Activated CD4-positive, alpha-beta memory T cell treated with anti-CD3 and anti-CD28 coated beads for 36 hours (primary cell): ENCODE measurements at regions of chr11 and their contacts with region 1.

Region 1: GRCh38 chr11:102451681-102452460 is 694 bp downstream of the TMEM123 start:
- DNase-seq: peak; percentile 86
- H3K4me3 Mint-ChIP-seq: peak overlapping the region; percentile 84
- H3K27ac Mint-ChIP-seq: peak overlapping the region; percentile 96
- H3K4me1 Mint-ChIP-seq: peaks cover 75% of the 10 kb centered on the region
- H3K27me3 Mint-ChIP-seq: no peaks in the 10 kb centered on the region

Region 2: DNA sequence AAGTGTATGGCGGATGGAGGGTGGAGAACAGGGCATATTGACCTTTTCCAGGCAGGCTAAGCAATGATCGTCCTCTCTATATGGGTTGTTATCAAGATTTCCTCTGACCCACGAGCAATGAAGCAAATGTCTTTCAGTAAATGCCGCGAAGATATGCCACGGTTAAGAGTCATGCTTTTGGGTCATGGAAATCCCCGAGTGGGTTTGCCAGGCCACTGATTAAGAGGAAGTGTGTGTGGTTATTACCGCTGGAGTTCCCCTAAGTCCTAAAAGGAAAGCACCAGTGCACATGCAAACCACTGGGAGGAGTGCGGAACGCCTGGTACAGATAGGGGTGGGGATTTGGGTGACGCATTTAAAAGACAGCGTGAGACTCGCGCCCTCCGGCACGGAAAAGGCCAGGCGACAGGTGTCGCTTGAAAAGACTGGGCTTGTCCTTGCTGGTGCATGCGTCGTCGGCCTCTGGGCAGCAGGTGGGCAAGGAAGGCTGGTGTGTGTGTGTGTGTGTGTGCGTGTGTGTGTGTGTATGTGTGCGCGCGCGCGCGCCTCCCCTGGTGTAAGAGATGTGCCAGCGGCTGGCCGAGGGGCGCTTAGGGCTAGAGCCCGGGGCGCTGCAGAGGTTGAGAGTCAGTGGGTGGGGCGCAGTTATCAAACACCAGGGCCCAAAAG is 134.6 kb before region 1 on chr11 and contains the start of gene BIRC3:
- CTCF ChIA-PET with region 1: no interaction called
- POLR2A ChIA-PET with region 1: interaction called, 6 read pairs
- intact Hi-C with region 1: loop called (anchors 1 kb)
- DNase-seq: peak; percentile 96
- H3K4me3 Mint-ChIP-seq: peak within 1 kb of the TSS; percentile 95
- H3K27ac Mint-ChIP-seq: peak within 1 kb of the TSS; percentile 100
- H3K4me1 Mint-ChIP-seq: peaks cover 56% of the 10 kb centered on the region
- H3K27me3 Mint-ChIP-seq: no peaks in the 10 kb centered on the region
- total RNA-seq, gene BIRC3: 135 to 139 TPM

Region 3: GRCh38 chr11:102420547-102420946 is 31.3 kb before region 1 on chr11:
- CTCF ChIA-PET with region 1: interaction called, 7 read pairs
- POLR2A ChIA-PET with region 1: interaction called, 6 read pairs
- intact Hi-C with region 1: loop called (anchors 1 kb)
- DNase-seq: peak; percentile 67
- H3K4me3 Mint-ChIP-seq: no peak overlapping the region
- H3K27ac Mint-ChIP-seq: peak overlapping the region; percentile 52
- H3K4me1 Mint-ChIP-seq: peaks cover 93% of the 10 kb centered on the region
- H3K27me3 Mint-ChIP-seq: no peaks in the 10 kb centered on the region

Region 4: DNA sequence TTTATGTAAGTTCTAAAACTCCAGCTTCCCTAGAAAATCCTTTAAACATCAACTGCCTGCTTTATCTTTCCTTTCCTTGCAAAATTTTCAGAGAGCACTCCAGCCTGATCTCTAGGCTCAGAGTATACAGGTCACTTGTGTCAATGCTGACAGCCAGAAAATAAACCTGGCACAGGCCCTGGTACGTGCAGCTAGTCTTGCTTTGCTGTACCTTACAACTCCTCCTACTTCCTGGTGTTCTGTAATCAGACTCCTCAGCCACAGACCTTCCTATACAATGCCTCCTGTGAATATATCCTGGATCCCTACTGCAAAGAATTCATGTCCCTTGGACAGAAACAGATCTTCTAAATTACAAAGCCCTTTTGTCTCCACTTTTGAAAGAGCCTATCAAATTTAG is 24.9 kb after region 1 on chr11:
- CTCF ChIA-PET with region 1: no interaction called
- POLR2A ChIA-PET with region 1: interaction called, 3 read pairs
- intact Hi-C with region 1: loop called (anchors 2 kb)
- DNase-seq: peak; percentile 58
- H3K4me3 Mint-ChIP-seq: peak overlapping the region; percentile 3
- H3K27ac Mint-ChIP-seq: peak overlapping the region; percentile 77
- H3K4me1 Mint-ChIP-seq: peaks cover 52% of the 10 kb centered on the region
- H3K27me3 Mint-ChIP-seq: no peaks in the 10 kb centered on the region

Region 5: DNA sequence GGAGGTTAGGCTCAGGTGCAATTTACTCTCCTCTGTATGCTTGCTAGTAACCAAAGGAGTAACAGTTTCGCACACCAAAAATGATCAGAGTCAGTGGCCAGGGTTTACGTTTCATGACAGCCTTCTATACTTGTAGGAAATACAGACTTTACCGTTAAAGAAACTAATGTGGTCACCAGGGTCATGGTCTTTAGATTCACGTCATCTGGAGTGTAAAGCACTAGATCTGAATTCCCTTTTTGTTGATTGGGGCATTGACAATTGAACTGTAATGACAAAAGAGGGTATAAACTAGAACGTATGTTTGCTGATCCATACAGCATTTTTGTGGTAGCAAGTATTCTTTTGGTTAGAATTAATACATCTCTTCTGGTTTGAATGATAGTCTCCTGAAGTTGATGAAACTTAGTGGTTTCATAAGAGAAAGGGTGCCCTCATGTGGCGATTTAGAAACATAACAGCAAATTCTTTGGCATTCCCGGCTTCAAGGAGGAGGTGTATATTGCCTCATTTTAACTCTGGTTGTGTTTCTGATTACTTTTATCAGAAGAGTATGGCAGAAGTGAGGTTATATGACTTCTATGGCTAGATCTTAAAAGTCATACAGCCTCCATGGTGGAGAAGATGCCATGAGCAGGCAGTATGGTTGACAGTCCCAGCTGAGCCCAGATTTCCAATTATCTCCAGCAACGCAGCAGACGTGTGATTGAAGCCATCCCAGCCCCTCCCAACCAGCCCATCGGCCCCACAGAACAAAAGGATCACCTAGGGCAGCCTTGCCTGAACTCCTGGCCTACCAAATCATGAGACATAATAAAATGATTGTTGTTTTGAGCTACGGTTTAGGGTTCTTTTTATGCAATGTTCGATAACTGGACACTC is 43.5 kb after region 1 on chr11:
- CTCF ChIA-PET with region 1: interaction called, 4 read pairs
- POLR2A ChIA-PET with region 1: no interaction called
- intact Hi-C with region 1: loop called (anchors 1 kb)
- DNase-seq: peak; percentile 22
- H3K4me3 Mint-ChIP-seq: no peak overlapping the region
- H3K27ac Mint-ChIP-seq: no peak overlapping the region
- H3K4me1 Mint-ChIP-seq: peaks cover 18% of the 10 kb centered on the region
- H3K27me3 Mint-ChIP-seq: peaks cover 7% of the 10 kb centered on the region